ENCODE measurements at regions of chr1 and their contacts with region 1.

Region 1: GRCh38 chr1:109446085-109446695 is 19.9 kb upstream of the PSMA5 start:
- DNase-seq: no peak
- ATAC-seq: no peak

Region 2: DNA sequence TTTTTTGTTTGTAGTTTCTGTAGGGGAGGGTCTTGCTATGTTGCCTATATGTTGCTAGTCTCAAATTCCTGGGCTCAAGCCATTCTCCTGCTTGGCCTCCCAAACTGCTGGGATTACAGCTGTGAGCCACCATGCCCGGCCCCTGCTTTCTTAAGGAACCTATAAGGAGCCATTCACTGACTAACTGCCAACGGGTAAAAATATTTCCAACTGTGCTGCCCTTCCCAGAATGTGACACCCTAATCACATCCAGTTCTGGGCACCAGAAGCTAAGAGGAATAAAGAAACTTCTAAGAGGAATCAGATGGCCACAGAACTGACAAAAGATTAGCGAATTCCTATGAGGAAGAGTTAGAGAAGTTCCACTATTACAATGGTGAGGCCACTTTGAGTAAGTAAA is 26.6 kb after region 1 on chr1:
- intact Hi-C with region 1: loop called (anchors 1 kb)
- DNase-seq: no peak
- ATAC-seq: no peak

Region 3: GRCh38 chr1:109493805-109494539 is 47.8 kb after region 1 on chr1 and contains the start of gene CYB561D1:
- intact Hi-C with region 1: no loop called
- DNase-seq: peak; percentile 93
- ATAC-seq: peak; percentile 93
- total RNA-seq, gene CYB561D1: 7.6 TPM